Left cardiac atrium (tissue), 4 donors: ENCODE measurements at regions of chr10 and their contacts with region 1.

Region 1: DNA sequence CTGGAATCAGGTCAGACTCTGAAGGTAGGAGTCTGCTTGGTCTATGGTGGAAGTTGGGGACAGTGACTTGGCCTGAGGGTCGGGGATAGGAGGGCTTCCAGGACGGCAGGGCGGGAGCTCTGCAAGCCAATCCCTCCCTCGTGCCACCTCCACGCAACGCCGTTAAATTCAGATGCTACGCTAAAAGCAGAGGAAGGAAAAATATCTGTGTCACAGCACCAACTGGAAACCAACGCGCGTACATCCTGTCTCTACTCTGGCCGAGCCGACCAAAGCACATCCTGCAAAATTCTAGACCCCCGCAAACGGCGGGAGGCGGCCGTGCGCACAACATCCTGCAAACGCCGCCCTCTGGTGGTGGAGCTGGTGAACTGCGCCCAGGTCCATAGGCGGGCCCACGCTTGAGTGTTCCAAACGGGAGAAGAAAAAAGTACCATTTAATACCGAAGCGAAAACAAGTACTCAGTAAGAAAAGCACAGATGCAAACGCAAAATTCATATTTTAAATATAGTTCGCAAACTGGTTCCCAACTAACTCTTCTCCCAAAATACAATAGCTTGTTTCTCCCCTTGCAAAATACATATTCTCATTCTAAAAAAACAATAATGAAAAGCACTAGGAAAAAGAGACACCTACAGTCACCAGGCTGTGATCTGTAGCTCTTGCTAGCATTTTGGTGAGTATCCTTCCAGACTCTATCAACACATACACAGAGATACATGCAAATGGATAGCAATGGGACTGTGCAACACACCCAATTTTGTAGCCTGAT is 45.7 kb upstream of the HSPA12A start:
- DNase-seq: peak; percentile 82
- ATAC-seq: peak; percentile 87 to 90

Region 2: GRCh38 chr10:116589926-116590325 is 198.2 kb before region 1 on chr10:
- intact Hi-C with region 1: no loop called
- DNase-seq: no peak
- ATAC-seq: no peak

Region 3: DNA sequence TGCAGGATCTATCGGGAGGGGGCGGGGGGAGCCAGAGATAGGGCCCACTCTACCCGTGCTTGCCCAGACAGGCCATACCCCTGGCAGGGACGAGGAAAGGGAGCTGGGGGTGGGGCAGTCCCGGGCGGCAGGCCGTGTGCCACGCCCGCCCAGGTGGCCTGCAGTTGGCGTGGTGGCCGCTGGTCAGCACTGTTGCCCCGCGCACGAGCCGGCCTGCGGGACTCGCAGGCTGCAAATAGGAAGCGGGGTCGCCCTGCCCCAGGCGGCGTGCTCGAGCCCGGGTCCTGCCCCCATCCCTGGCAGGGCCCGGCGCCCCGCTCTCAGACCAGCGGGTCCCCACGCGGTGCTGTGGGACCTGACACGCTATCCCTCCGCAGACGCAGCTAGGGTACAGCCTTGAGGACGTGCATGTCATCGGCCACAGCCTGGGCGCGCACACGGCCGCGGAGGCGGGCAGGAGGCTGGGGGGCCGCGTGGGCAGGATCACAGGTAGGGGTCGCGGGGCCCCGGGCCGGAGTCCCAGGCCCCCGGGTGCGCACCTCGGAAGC is 160.6 kb before region 1 on chr10:
- intact Hi-C with region 1: loop called in 1 of 2 experiments (anchors 5 kb)
- DNase-seq: no peak
- ATAC-seq: peak; percentile 55 to 75

Region 4: GRCh38 chr10:116910910-116911309 is 122.8 kb after region 1 on chr10:
- intact Hi-C with region 1: no loop called
- DNase-seq: no peak
- ATAC-seq: peak in 1 of 2 donors; percentile 65